A549 (cell line): ENCODE measurements at regions of chr6 and their contacts with region 1.

Region 1: DNA sequence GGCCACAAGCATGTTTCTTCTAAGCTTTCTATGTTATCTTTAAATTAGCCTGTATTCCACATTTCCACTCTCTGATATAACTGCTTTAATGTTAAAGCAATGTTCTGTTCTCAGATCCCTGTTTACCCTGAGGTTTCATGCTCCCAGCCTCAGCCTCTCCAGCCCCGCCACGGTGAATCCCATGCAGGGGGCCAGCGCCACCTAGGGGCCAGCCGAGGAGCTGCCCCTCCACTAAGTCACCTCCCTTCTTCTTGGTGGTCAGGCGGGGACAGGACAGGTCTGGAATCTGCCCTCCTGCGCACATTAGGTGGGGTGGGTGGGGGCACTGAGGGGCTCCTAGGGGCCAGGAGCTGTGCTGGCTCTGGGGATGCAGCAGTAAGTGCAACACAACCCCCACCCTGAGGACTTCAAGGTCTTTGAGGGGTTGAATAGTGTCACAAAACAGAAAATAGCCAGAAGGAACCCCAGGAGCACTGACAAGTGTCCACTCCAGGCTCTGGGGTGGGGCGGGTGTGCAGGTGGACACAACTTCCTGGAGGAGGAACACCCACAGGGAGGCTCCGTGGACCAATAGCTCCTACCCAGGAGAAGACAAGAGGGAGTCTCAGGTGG is 61.6 kb downstream of the RAB44 start:
- DNase-seq: peak; percentile 69 to 82
- ATAC-seq: peak; percentile 87 to 98
- H3K4me3 ChIP-seq: no peak overlapping the region
- H3K27ac ChIP-seq: peak overlapping the region in 1 of 2 experiments; percentile 59; a peak in 2 of 6 replicates
- H3K4me1 ChIP-seq: peaks cover 9% of the 10 kb centered on the region; the same call in 1 of the 3 replicates
- CTCF ChIP-seq: peak; percentile 88
- EP300 ChIP-seq: no peak
- POLR2A ChIP-seq: no peak
- RAD21 ChIP-seq: peak; percentile 86 to 88

Region 2: GRCh38 chr6:36615018-36615761 is 144.1 kb before region 1 on chr6:
- CTCF ChIA-PET with region 1: interaction called, 50 read pairs
- POLR2A ChIA-PET with region 1: interaction called, 3 read pairs
- DNase-seq: peak; percentile 40 to 60
- ATAC-seq: peak; percentile 9 to 15; a peak in 2 of 6 replicates
- H3K4me3 ChIP-seq: no peak overlapping the region
- H3K27ac ChIP-seq: peak overlapping the region; percentile 76 to 79
- H3K4me1 ChIP-seq: peaks cover 47% of the 10 kb centered on the region
- CTCF ChIP-seq: peak; percentile 78
- EP300 ChIP-seq: no peak
- POLR2A ChIP-seq: no peak
- RAD21 ChIP-seq: peak; percentile 78 to 80

Region 3: DNA sequence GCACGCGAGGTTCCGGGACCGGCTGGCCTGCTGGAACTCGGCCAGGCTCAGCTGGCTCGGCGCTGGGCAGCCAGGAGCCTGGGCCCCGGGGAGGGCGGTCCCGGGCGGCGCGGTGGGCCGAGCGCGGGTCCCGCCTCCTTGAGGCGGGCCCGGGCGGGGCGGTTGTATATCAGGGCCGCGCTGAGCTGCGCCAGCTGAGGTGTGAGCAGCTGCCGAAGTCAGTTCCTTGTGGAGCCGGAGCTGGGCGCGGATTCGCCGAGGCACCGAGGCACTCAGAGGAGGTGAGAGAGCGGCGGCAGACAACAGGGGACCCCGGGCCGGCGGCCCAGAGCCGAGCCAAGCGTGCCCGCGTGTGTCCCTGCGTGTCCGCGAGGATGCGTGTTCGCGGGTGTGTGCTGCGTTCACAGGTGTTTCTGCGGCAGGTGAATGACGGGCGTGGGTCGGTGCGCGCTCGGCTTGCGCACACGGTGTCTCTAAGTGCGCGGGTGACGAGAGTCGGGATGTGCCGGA is 80.7 kb before region 1 on chr6 and contains the start of gene CDKN1A:
- CTCF ChIA-PET with region 1: interaction called, 10 read pairs
- POLR2A ChIA-PET with region 1: no interaction called
- DNase-seq: peak; percentile 66 to 86
- ATAC-seq: peak; percentile 77 to 89
- H3K4me3 ChIP-seq: peak within 1 kb of the TSS; percentile 86
- H3K27ac ChIP-seq: peak within 1 kb of the TSS; percentile 86 to 94
- H3K4me1 ChIP-seq: peaks cover 50% of the 10 kb centered on the region
- CTCF ChIP-seq: no peak
- EP300 ChIP-seq: peak in 1 of 2 experiments; percentile 12; a peak in 1 of 5 replicates
- POLR2A ChIP-seq: peak; percentile 98
- RAD21 ChIP-seq: 0 out of 5 replicates have a peak, but pooled peaks of 1 of the 2 experiments have one; percentile 17
- polyA plus RNA-seq, gene CDKN1A: 183 and 192 TPM in 2 replicates

Region 4: GRCh38 chr6:36745836-36746235 is 13.4 kb before region 1 on chr6:
- CTCF ChIA-PET with region 1: interaction called, 11 read pairs
- POLR2A ChIA-PET with region 1: no interaction called
- DNase-seq: no peak
- ATAC-seq: peak in 1 of 2 experiments; percentile 21; a peak in 2 of 6 replicates
- H3K4me3 ChIP-seq: no peak overlapping the region
- H3K27ac ChIP-seq: no peak overlapping the region
- H3K4me1 ChIP-seq: peaks cover 21% of the 10 kb centered on the region
- CTCF ChIP-seq: no peak
- EP300 ChIP-seq: no peak
- POLR2A ChIP-seq: no peak
- RAD21 ChIP-seq: no peak

Region 5: GRCh38 chr6:36809941-36810803 is 50.9 kb after region 1 on chr6:
- CTCF ChIA-PET with region 1: interaction called, 11 read pairs
- POLR2A ChIA-PET with region 1: no interaction called
- DNase-seq: no peak
- ATAC-seq: peak in 1 of 2 experiments; percentile 43; a peak in 1 of 6 replicates
- H3K4me3 ChIP-seq: no peak overlapping the region
- H3K27ac ChIP-seq: no peak overlapping the region
- H3K4me1 ChIP-seq: no peaks in the 10 kb centered on the region
- CTCF ChIP-seq: no peak
- EP300 ChIP-seq: no peak
- POLR2A ChIP-seq: no peak
- RAD21 ChIP-seq: 0 out of 5 replicates have a peak, but pooled peaks of 1 of the 2 experiments have one; percentile 8